Mammary epithelial cell (primary cell): ENCODE measurements at regions of chr4 and their contacts with region 1.

Region 1: GRCh38 chr4:148834804-148835631 is 392.8 kb upstream of the NR3C2 start:
- DNase-seq: peak; percentile 40
- H3K4me3 ChIP-seq: no peak overlapping the region
- H3K27ac ChIP-seq: peak overlapping the region; percentile 32
- H3K4me1 ChIP-seq: peaks cover 20% of the 10 kb centered on the region
- H3K27me3 ChIP-seq: no peaks in the 10 kb centered on the region
- CTCF ChIP-seq: no peak

Region 2: GRCh38 chr4:148790663-148791062 is 44.4 kb before region 1 on chr4:
- CTCF ChIA-PET with region 1: no interaction called
- dilution Hi-C with region 1: no loop called
- in situ Hi-C with region 1: no loop called
- intact Hi-C with region 1: loop called (anchors 5 kb)
- DNase-seq: peak; percentile 94
- H3K4me3 ChIP-seq: no peak overlapping the region
- H3K27ac ChIP-seq: peak overlapping the region; percentile 76
- H3K4me1 ChIP-seq: peaks cover 30% of the 10 kb centered on the region
- H3K27me3 ChIP-seq: no peaks in the 10 kb centered on the region
- CTCF ChIP-seq: no peak